ENCODE measurements at regions of chr2 and their contacts with region 1.

Region 1: GRCh38 chr2:191218292-191218898 is 26.8 kb upstream of the MYO1B start:
- DNase-seq: peak; percentile 69
- ATAC-seq: peak; percentile 62
- H3K4me3 Mint-ChIP-seq: no peak overlapping the region
- H3K27ac Mint-ChIP-seq: no peak overlapping the region
- H3K4me1 Mint-ChIP-seq: peaks cover 32% of the 10 kb centered on the region
- H3K27me3 Mint-ChIP-seq: no peaks in the 10 kb centered on the region

Region 2: GRCh38 chr2:191171708-191172355 is 46.6 kb before region 1 on chr2:
- CTCF ChIA-PET with region 1: interaction called, 24 read pairs
- POLR2A ChIA-PET with region 1: no interaction called
- intact Hi-C with region 1: loop called (anchors 2 kb)
- DNase-seq: peak; percentile 48
- ATAC-seq: peak; percentile 56
- H3K4me3 Mint-ChIP-seq: no peak overlapping the region
- H3K27ac Mint-ChIP-seq: peak overlapping the region; percentile 60
- H3K4me1 Mint-ChIP-seq: peaks cover 78% of the 10 kb centered on the region
- H3K27me3 Mint-ChIP-seq: no peaks in the 10 kb centered on the region

Region 3: GRCh38 chr2:191189112-191189635 is 29.2 kb before region 1 on chr2:
- CTCF ChIA-PET with region 1: interaction called, 16 read pairs
- POLR2A ChIA-PET with region 1: interaction called, 3 read pairs
- intact Hi-C with region 1: loop called (anchors 1 kb)
- DNase-seq: no peak
- ATAC-seq: no peak
- H3K4me3 Mint-ChIP-seq: peak overlapping the region; percentile 19
- H3K27ac Mint-ChIP-seq: peak overlapping the region; percentile 68
- H3K4me1 Mint-ChIP-seq: peaks cover 63% of the 10 kb centered on the region
- H3K27me3 Mint-ChIP-seq: no peaks in the 10 kb centered on the region

Region 4: GRCh38 chr2:191195021-191195420 is 23.4 kb before region 1 on chr2:
- CTCF ChIA-PET with region 1: interaction called, 16 read pairs
- POLR2A ChIA-PET with region 1: interaction called, 3 read pairs
- intact Hi-C with region 1: loop called (anchors 1 kb)
- DNase-seq: no peak
- ATAC-seq: no peak
- H3K4me3 Mint-ChIP-seq: no peak overlapping the region
- H3K27ac Mint-ChIP-seq: peak overlapping the region; percentile 98
- H3K4me1 Mint-ChIP-seq: peaks cover 57% of the 10 kb centered on the region
- H3K27me3 Mint-ChIP-seq: no peaks in the 10 kb centered on the region

Region 5: GRCh38 chr2:191204433-191204832 is 14.0 kb before region 1 on chr2:
- CTCF ChIA-PET with region 1: interaction called, 26 read pairs
- POLR2A ChIA-PET with region 1: no interaction called
- intact Hi-C with region 1: no loop called
- DNase-seq: no peak
- ATAC-seq: peak; percentile 53
- H3K4me3 Mint-ChIP-seq: peak overlapping the region; percentile 42
- H3K27ac Mint-ChIP-seq: peak overlapping the region; percentile 67
- H3K4me1 Mint-ChIP-seq: peaks cover 47% of the 10 kb centered on the region
- H3K27me3 Mint-ChIP-seq: no peaks in the 10 kb centered on the region

Region 6: GRCh38 chr2:191521608-191522208 is 303.3 kb after region 1 on chr2:
- CTCF ChIA-PET with region 1: interaction called, 14 read pairs
- POLR2A ChIA-PET with region 1: no interaction called
- intact Hi-C with region 1: loop called (anchors 1 kb)
- DNase-seq: no peak
- ATAC-seq: no peak
- H3K4me3 Mint-ChIP-seq: no peak overlapping the region
- H3K27ac Mint-ChIP-seq: no peak overlapping the region
- H3K4me1 Mint-ChIP-seq: no peaks in the 10 kb centered on the region
- H3K27me3 Mint-ChIP-seq: peaks cover 6% of the 10 kb centered on the region